HepG2 (cell line): ENCODE measurements at regions of chr17 and their contacts with region 1.

Region 1: GRCh38 chr17:58352014-58352842 is at the start of gene SUPT4H1:
- DNase-seq: peak; percentile 94
- ATAC-seq: peak; percentile 94
- H3K4me3 ChIP-seq: peak within 1 kb of the TSS; percentile 73 to 92 (median 88)
- H3K27ac ChIP-seq: peak within 1 kb of the TSS; percentile 88
- H3K4me1 ChIP-seq: peaks cover 39% of the 10 kb centered on the region
- H3K27me3 ChIP-seq: no peaks in the 10 kb centered on the region; a peak in 1 of 5 replicates
- CTCF ChIP-seq: peak; percentile 64
- EP300 ChIP-seq: peak in 1 of 2 experiments; percentile 72; a peak in 2 of 4 replicates
- POLR2A ChIP-seq: peak; percentile 85 to 86
- RAD21 ChIP-seq: peak; percentile 96
- total RNA-seq, gene SUPT4H1: 155 and 252 TPM in 2 replicates

Region 2: DNA sequence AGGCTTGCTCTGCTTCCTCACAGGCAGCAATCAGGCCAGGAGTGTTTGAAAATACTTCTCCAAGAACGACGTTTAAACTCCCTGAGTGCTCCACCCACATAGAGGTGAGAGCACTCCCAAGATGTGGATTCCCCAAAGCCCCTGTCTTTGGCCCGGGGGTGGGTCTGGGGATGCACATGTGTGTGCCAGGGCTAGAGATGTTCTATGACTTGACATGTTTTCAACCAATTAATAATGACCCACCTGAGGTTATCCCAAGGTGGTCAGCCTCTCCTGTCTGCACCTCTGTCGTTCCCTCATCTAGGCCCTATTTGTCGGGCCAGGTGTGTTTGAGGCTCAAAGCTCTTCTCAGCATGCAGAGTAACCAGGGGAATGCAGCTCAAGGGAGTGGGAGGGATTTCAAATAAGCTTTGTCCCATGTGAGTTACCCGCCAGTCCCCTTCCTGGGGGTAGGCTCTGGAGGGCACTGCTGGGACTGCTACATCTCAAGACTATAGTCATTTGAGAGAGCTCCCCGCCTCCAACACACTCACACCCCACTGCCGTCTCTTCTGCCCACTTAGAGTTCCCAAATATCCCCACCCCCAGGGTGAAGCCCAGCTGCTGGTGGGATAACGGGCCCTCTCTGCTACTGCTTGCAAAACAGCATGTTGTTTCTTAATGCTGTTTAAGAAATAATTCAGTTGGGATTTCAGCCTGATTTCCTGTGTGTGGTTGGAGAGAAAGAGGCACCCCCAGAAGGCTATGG is 67.7 kb before region 1 on chr17:
- CTCF ChIA-PET with region 1: no interaction called
- POLR2A ChIA-PET with region 1: no interaction called
- in situ Hi-C with region 1: no loop called
- intact Hi-C with region 1: no loop called
- DNase-seq: no peak
- ATAC-seq: no peak; the same call in 2 of the 3 replicates
- H3K4me3 ChIP-seq: no peak overlapping the region
- H3K27ac ChIP-seq: no peak overlapping the region
- H3K4me1 ChIP-seq: peaks cover 10% of the 10 kb centered on the region
- H3K27me3 ChIP-seq: peaks cover 5 to 41% of the 10 kb centered on the region in 2 experiments; a peak in 4 of 5 replicates
- CTCF ChIP-seq: no peak
- EP300 ChIP-seq: no peak
- POLR2A ChIP-seq: no peak
- RAD21 ChIP-seq: no peak

Region 3: DNA sequence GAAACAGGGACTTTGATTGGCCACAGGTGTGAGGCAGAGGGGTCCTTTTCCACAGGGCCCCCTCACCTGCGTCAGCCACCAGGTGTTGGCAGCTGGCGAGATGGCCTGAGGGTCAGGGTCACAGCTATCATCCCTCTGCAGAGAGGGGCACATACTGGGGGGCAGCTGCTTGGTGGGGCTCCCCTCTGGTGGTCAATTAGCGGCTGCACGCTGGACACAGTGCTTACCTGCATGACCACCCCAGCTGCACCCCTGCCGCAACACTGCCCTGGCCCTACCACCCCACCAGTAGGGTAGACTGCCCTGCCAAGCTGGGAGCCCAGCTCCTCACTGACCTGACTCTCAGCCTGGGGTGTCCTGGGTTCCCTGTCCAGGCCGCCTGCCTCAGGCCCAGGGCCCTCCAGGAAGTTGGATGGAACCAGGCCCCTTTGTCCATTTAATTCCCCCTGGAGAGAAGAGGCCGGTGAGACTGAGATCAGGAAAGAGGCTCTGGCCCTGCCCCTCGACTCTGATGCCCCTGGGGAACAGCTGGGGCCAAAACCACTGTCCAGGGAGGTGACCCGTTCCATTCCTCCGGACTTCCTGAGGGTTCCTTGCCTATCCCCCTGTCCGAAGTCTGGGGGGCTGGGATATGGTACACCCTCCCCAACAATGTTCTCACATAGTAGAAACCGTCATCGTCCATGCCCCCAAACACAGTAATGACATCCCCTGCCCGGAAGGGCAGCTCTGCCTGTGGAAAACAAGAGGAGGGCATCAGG is 47.3 kb before region 1 on chr17:
- CTCF ChIA-PET with region 1: no interaction called
- POLR2A ChIA-PET with region 1: no interaction called
- in situ Hi-C with region 1: no loop called
- intact Hi-C with region 1: no loop called
- DNase-seq: no peak
- ATAC-seq: no peak
- H3K4me3 ChIP-seq: no peak overlapping the region
- H3K27ac ChIP-seq: no peak overlapping the region
- H3K4me1 ChIP-seq: peaks cover 18% of the 10 kb centered on the region
- H3K27me3 ChIP-seq: peaks cover 22 to 75% of the 10 kb centered on the region in 2 experiments; a peak in 4 of 5 replicates
- CTCF ChIP-seq: no peak
- EP300 ChIP-seq: no peak
- POLR2A ChIP-seq: no peak
- RAD21 ChIP-seq: no peak

Region 4: GRCh38 chr17:58317421-58318064 is 34.7 kb before region 1 on chr17:
- CTCF ChIA-PET with region 1: no interaction called
- POLR2A ChIA-PET with region 1: interaction called, 12 read pairs
- in situ Hi-C with region 1: no loop called
- intact Hi-C with region 1: loop called (anchors 2 kb)
- DNase-seq: peak; percentile 75
- ATAC-seq: peak; percentile 84
- H3K4me3 ChIP-seq: no peak overlapping the region
- H3K27ac ChIP-seq: no peak overlapping the region
- H3K4me1 ChIP-seq: peaks cover 19% of the 10 kb centered on the region; the same call in 1 of the 2 replicates
- H3K27me3 ChIP-seq: peaks cover 17 to 68% of the 10 kb centered on the region in 2 experiments
- CTCF ChIP-seq: peak; percentile 99
- EP300 ChIP-seq: no peak
- POLR2A ChIP-seq: no peak
- RAD21 ChIP-seq: peak; percentile 96

Region 5: DNA sequence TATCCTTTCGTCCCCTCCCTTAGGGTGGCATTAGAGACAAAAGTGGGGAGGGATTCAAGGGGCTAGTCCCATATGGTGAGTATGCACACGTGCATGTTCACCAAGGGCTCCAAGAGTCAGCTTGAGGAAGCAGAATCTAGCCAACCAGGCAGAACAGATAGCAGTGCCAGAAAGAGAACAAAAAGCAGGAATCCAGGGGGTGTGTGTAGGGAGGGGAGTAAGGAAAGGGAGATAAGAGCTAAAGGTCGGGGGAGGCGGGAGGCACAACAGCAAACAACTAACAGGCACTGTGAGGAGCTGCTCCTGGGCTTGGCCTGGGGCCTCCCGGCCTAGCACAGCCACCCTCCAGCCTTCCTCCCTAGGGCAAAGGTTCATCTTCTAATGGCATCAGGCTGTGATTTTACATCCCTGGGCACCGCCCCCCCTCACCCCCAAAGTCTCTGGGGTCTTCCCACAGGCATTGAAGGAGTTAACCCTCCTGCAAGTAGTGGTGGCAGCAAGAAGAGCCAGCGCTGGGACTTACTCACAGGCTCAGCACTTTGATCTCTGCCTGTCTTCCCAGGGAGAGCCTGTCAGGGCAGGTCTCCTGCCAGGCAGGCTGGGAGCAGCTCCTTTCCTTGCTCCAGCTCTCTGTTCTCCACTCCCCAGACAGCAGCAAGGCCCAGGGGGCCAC is 12.2 kb after region 1 on chr17:
- CTCF ChIA-PET with region 1: no interaction called
- POLR2A ChIA-PET with region 1: interaction called, 252 read pairs
- in situ Hi-C with region 1: no loop called
- intact Hi-C with region 1: loop called (anchors 1 kb)
- DNase-seq: peak; percentile 84
- ATAC-seq: peak; percentile 92
- H3K4me3 ChIP-seq: peak overlapping the region in 1 of 3 experiments; percentile 32; a peak in 2 of 6 replicates
- H3K27ac ChIP-seq: peak overlapping the region; percentile 89
- H3K4me1 ChIP-seq: peaks cover 94% of the 10 kb centered on the region
- H3K27me3 ChIP-seq: no peaks in the 10 kb centered on the region
- CTCF ChIP-seq: peak; percentile 16; the same call in 1 of the 2 replicates
- EP300 ChIP-seq: peak in 1 of 2 experiments; percentile 80; a peak in 1 of 4 replicates
- POLR2A ChIP-seq: peak; percentile 20 to 58; a peak in 1 of 4 replicates
- RAD21 ChIP-seq: peak; percentile 1

Region 6: GRCh38 chr17:58377093-58377601 is 24.9 kb after region 1 on chr17:
- CTCF ChIA-PET with region 1: no interaction called
- POLR2A ChIA-PET with region 1: interaction called, 145 read pairs
- in situ Hi-C with region 1: no loop called
- intact Hi-C with region 1: loop called (anchors 1 kb)
- DNase-seq: no peak
- ATAC-seq: no peak
- H3K4me3 ChIP-seq: no peak overlapping the region
- H3K27ac ChIP-seq: peak overlapping the region; percentile 31
- H3K4me1 ChIP-seq: peaks cover 97% of the 10 kb centered on the region
- H3K27me3 ChIP-seq: no peaks in the 10 kb centered on the region
- CTCF ChIP-seq: no peak
- EP300 ChIP-seq: no peak
- POLR2A ChIP-seq: no peak
- RAD21 ChIP-seq: no peak

Region 7: GRCh38 chr17:58391302-58391984 is 39.2 kb after region 1 on chr17:
- CTCF ChIA-PET with region 1: no interaction called
- POLR2A ChIA-PET with region 1: interaction called, 56 read pairs
- in situ Hi-C with region 1: no loop called
- intact Hi-C with region 1: loop called (anchors 1 kb)
- DNase-seq: peak; percentile 100
- ATAC-seq: peak; percentile 96
- H3K4me3 ChIP-seq: peak overlapping the region in 2 of 3 experiments; percentile 8 to 36; a peak in 1 of 6 replicates
- H3K27ac ChIP-seq: peak overlapping the region; percentile 93
- H3K4me1 ChIP-seq: peaks cover 97% of the 10 kb centered on the region
- H3K27me3 ChIP-seq: no peaks in the 10 kb centered on the region
- CTCF ChIP-seq: peak; percentile 24; the same call in 1 of the 2 replicates
- EP300 ChIP-seq: peak; percentile 99 to 100
- POLR2A ChIP-seq: peak; percentile 86 to 95
- RAD21 ChIP-seq: peak; percentile 66; the same call in 1 of the 2 replicates

Region 8: GRCh38 chr17:58411438-58411797 is 59.2 kb after region 1 on chr17:
- CTCF ChIA-PET with region 1: no interaction called
- POLR2A ChIA-PET with region 1: interaction called, 254 read pairs
- in situ Hi-C with region 1: no loop called
- intact Hi-C with region 1: no loop called
- DNase-seq: no peak
- ATAC-seq: no peak
- H3K4me3 ChIP-seq: peak overlapping the region; percentile 73 to 88 (median 81)
- H3K27ac ChIP-seq: peak overlapping the region; percentile 77
- H3K4me1 ChIP-seq: peaks cover 64% of the 10 kb centered on the region
- H3K27me3 ChIP-seq: no peaks in the 10 kb centered on the region; a peak in 2 of 5 replicates
- CTCF ChIP-seq: no peak
- EP300 ChIP-seq: no peak
- POLR2A ChIP-seq: no peak
- RAD21 ChIP-seq: no peak

Region 9: DNA sequence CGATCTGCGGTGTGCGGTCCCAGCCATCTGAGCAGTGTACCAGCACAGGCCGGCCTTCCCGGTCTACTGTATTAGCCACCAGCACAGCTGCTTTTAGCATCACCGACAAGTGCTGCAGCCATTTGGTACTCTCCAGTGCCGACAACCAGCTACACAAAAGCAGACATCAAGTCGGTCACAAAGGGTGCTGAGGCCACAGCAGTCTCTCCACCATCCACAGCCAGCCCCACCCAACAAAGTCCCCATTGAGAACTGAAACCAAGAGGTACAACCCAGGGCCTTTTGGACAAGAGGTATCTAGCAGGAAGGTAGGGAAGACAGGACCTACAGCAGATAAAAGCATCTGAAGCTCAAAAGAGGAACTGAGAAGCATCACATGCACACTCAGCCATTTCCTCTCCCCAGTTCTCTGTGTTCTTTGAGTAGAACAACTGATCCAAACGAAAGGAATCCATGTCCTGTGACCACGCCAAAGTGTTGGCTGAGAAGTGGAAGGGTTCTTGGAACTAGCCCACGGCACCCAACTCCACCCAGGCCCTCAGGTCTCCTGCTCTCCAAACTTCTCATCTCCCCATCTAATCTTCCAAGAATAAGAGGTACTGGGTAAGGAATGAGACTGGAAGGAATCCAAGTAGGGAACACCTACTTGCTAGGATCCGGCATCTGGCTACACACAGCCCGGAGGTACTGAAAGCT is 152.7 kb after region 1 on chr17:
- CTCF ChIA-PET with region 1: no interaction called
- POLR2A ChIA-PET with region 1: no interaction called
- in situ Hi-C with region 1: no loop called
- intact Hi-C with region 1: no loop called
- DNase-seq: no peak
- ATAC-seq: no peak; the same call in 2 of the 3 replicates
- H3K4me3 ChIP-seq: no peak overlapping the region
- H3K27ac ChIP-seq: no peak overlapping the region
- H3K4me1 ChIP-seq: peaks cover 24% of the 10 kb centered on the region
- H3K27me3 ChIP-seq: no peaks in the 10 kb centered on the region
- CTCF ChIP-seq: no peak
- EP300 ChIP-seq: no peak
- POLR2A ChIP-seq: no peak
- RAD21 ChIP-seq: no peak